PC-9 (cell line): ENCODE measurements at regions of chr19 and their contacts with region 1.

Region 1: GRCh38 chr19:48646001-48646721 is at the start of gene CA11:
- DNase-seq: peak; percentile 66 to 90
- H3K4me3 ChIP-seq: peak within 1 kb of the TSS; percentile 69
- H3K27ac ChIP-seq: no peak within 1 kb of the TSS
- H3K4me1 ChIP-seq: peaks cover 23% of the 10 kb centered on the region
- H3K27me3 ChIP-seq: no peaks in the 10 kb centered on the region
- CTCF ChIP-seq: peak; percentile 97
- total RNA-seq, gene CA11: 11.0 and 12.2 TPM in 2 replicates

Region 2: GRCh38 chr19:48433337-48433736 is 212.8 kb before region 1 on chr19:
- CTCF ChIA-PET with region 1: no interaction called
- POLR2A ChIA-PET with region 1: no interaction called
- intact Hi-C with region 1: no loop called
- DNase-seq: no peak
- H3K4me3 ChIP-seq: no peak overlapping the region
- H3K27ac ChIP-seq: no peak overlapping the region
- H3K4me1 ChIP-seq: no peaks in the 10 kb centered on the region
- H3K27me3 ChIP-seq: no peaks in the 10 kb centered on the region
- CTCF ChIP-seq: no peak

Region 3: DNA sequence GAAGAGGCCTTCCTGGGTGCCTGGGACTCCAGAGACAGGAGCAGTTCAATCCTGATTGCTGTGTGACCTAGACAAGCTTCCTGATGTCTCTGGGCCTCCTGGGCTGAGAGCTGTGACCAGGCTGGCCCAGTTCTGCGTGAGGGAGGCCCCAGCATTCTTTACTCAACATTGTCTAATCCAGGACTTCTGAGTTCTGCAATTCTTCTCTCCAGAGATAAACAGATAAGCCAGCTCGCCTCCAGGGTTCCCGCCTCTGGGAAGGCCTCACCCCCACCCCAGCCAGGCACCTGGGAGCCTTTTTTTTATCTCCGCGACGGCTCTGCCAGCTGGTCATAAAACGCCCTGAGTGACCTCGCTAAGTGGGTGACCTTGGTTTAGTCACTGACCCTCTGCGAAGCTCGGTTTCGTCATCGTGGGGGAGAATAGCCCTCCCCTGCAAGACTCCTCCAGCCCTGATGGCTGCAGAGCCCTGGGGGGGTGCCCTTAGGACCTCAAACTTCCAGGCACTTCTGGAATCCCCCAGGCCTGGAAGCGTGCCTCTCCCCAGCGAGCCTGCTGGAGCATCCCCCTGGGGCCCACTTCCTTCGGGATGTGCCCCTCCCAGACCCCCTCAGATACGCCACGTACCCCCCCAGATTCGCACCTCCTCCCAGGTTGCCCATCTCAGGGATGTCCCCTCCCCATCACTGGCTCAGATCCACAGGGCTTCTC is 92.3 kb before region 1 on chr19:
- CTCF ChIA-PET with region 1: no interaction called
- POLR2A ChIA-PET with region 1: no interaction called
- intact Hi-C with region 1: no loop called
- DNase-seq: peak; percentile 85 to 89
- H3K4me3 ChIP-seq: peak overlapping the region; percentile 5; the same call in 1 of the 2 replicates
- H3K27ac ChIP-seq: peak overlapping the region; percentile 49
- H3K4me1 ChIP-seq: peaks cover 59% of the 10 kb centered on the region
- H3K27me3 ChIP-seq: no peaks in the 10 kb centered on the region
- CTCF ChIP-seq: no peak

Region 4: DNA sequence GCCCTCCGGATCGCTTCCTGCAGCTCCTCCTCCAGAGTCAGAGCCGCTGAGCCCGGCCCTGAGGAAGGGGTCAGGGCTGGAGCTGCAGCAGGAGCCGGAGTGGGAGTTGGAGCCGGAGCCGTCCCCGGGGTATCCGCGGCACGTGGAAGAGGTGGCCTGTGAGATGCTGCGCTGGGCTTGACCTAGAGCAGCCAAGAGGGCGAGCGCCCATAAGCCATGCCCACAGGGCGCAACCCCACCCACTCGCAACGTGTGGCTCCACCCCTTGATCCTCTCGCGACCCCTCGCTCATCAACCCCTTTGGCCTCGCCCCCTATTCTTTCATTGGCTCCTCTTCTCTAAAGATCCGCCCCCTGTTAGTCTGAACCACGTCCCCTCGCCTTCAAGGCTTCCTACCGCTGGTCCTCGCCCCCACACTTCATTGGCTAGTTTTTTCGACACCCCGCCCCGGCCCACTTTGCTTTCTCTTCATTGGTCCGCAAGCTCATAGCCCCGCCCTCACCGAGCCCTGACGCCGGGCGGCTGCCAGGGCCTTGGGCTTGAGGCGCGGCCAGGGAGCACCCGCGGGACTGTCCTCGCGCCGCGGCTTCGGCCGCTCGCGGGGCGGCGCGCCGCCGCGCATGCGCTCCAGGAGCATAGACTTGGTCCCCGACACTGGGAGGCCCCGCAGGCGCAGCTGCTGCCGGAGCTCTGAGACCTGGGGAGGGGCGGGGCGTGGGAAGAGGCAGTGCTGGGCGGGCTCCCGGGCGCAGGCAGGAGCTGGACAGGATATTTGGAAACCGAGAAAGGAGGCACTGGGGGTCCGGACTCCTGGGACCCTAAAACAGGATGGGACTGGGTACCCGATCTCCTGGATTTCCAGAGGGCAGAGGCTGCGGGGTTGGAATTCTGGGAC is 68.0 kb after region 1 on chr19:
- CTCF ChIA-PET with region 1: interaction called, 4 read pairs
- POLR2A ChIA-PET with region 1: no interaction called
- intact Hi-C with region 1: loop called (anchors 2 kb)
- DNase-seq: peak; percentile 99 to 100
- H3K4me3 ChIP-seq: peak overlapping the region; percentile 83
- H3K27ac ChIP-seq: peak overlapping the region; percentile 51
- H3K4me1 ChIP-seq: peaks cover 19% of the 10 kb centered on the region
- H3K27me3 ChIP-seq: no peaks in the 10 kb centered on the region
- CTCF ChIP-seq: no peak

Region 5: GRCh38 chr19:48752498-48753365 is 106.6 kb after region 1 on chr19 and contains the start of gene FUT1:
- CTCF ChIA-PET with region 1: no interaction called
- POLR2A ChIA-PET with region 1: no interaction called
- intact Hi-C with region 1: loop called (anchors 5 kb)
- DNase-seq: peak; percentile 95 to 98
- H3K4me3 ChIP-seq: peak within 1 kb of the TSS; percentile 78
- H3K27ac ChIP-seq: peak within 1 kb of the TSS; percentile 66
- H3K4me1 ChIP-seq: peaks cover 41% of the 10 kb centered on the region
- H3K27me3 ChIP-seq: no peaks in the 10 kb centered on the region
- CTCF ChIP-seq: peak; percentile 66
- total RNA-seq, gene FUT1: 7.9 and 9.6 TPM in 2 replicates

Region 6: GRCh38 chr19:48835734-48836088 is 189.6 kb after region 1 on chr19:
- CTCF ChIA-PET with region 1: no interaction called
- POLR2A ChIA-PET with region 1: no interaction called
- intact Hi-C with region 1: loop called (anchors 1 kb)
- DNase-seq: peak; percentile 83 to 92
- H3K4me3 ChIP-seq: peak overlapping the region; percentile 67
- H3K27ac ChIP-seq: peak overlapping the region; percentile 28
- H3K4me1 ChIP-seq: no peaks in the 10 kb centered on the region
- H3K27me3 ChIP-seq: no peaks in the 10 kb centered on the region
- CTCF ChIP-seq: peak; percentile 93

Region 7: DNA sequence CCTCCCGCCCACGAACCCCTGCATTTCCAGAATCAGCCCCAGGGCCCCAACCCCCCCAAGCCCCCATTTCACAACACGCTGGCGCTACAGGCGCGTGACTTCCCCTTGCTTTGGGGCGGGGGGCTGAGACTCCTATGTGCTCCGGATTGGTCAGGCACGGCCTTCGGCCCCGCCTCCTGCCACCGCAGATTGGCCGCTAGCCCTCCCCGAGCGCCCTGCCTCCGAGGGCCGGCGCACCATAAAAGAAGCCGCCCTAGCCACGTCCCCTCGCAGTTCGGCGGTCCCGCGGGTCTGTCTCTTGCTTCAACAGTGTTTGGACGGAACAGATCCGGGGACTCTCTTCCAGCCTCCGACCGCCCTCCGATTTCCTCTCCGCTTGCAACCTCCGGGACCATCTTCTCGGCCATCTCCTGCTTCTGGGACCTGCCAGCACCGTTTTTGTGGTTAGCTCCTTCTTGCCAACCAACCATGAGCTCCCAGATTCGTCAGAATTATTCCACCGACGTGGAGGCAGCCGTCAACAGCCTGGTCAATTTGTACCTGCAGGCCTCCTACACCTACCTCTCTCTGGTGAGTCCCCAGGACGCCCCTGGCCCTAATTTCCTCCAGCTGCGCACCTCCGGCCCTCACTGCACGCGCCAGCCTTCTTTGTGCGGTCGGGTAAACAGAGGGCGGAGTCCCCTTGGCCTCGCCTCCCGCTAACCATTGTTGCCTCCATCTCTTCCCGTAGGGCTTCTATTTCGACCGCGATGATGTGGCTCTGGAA is 319.1 kb after region 1 on chr19 and contains the start of gene FTL:
- CTCF ChIA-PET with region 1: no interaction called
- POLR2A ChIA-PET with region 1: interaction called, 10 read pairs
- intact Hi-C with region 1: loop called (anchors 5 kb)
- DNase-seq: peak; percentile 92 to 99
- H3K4me3 ChIP-seq: peak within 1 kb of the TSS; percentile 84
- H3K27ac ChIP-seq: peak within 1 kb of the TSS; percentile 95
- H3K4me1 ChIP-seq: peaks cover 39% of the 10 kb centered on the region
- H3K27me3 ChIP-seq: no peaks in the 10 kb centered on the region
- CTCF ChIP-seq: no peak
- total RNA-seq, gene FTL: 3,402 and 3,822 TPM in 2 replicates